Naive thymus-derived CD4-positive, alpha-beta T cell (primary cell): ENCODE measurements at regions of chr3 and their contacts with region 1.

Region 1: DNA sequence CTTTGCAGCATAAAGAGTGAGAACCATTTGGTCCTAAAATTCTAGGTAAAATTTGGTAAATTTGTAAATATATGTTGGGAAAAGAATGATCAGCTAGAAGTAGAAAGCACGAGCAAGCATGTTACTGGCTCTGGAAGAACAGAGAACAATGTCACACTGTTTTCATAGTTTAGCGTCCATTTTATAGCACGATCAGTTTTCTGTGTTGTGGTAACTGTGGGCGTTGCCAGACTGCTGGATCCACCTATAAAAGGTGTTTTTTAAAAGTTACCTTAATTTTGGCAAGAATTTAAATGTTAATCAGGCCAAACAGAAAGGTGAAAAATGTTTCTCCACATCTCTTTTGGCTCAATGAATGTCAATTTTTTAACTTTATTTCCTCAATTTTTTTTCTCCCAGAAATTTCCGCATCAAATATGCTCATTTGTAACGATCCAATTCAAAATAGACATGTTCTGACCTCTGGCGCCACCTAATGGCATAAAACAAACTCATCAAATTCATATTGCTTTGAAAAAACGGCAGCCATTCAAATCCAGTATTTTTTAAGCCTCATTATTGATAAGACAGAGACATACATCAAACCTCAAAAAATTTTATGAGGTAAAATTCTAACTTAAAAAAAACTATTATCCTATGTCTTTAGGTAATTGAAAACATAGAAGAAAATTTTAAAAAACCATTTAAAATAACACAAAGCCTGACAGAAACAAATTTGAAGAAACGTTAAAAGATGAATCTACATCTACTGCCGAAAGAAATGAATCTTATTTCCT is 5.5 kb upstream of the GP5 start:
- DNase-seq: peak in 7 of 9 donors; percentile 47 to 71 (median 65)
- ATAC-seq: peak; percentile 80
- H3K4me3 ChIP-seq: no peak overlapping the region
- H3K4me3 Mint-ChIP-seq: peak overlapping the region in 7 of 10 donors; percentile 1 to 76 (median 43)
- H3K27ac ChIP-seq: no peak overlapping the region
- H3K27ac Mint-ChIP-seq: peak overlapping the region in 4 of 9 donors; percentile 1 to 9 (median 3)
- H3K4me1 ChIP-seq: peaks cover 0 to 7% of the 10 kb centered on the region in 2 donors
- H3K4me1 Mint-ChIP-seq: peaks cover 7 to 17% (median 16%) of the 10 kb centered on the region in 7 donors
- H3K27me3 ChIP-seq: no peaks in the 10 kb centered on the region
- H3K27me3 Mint-ChIP-seq: no peaks in the 10 kb centered on the region

Region 2: DNA sequence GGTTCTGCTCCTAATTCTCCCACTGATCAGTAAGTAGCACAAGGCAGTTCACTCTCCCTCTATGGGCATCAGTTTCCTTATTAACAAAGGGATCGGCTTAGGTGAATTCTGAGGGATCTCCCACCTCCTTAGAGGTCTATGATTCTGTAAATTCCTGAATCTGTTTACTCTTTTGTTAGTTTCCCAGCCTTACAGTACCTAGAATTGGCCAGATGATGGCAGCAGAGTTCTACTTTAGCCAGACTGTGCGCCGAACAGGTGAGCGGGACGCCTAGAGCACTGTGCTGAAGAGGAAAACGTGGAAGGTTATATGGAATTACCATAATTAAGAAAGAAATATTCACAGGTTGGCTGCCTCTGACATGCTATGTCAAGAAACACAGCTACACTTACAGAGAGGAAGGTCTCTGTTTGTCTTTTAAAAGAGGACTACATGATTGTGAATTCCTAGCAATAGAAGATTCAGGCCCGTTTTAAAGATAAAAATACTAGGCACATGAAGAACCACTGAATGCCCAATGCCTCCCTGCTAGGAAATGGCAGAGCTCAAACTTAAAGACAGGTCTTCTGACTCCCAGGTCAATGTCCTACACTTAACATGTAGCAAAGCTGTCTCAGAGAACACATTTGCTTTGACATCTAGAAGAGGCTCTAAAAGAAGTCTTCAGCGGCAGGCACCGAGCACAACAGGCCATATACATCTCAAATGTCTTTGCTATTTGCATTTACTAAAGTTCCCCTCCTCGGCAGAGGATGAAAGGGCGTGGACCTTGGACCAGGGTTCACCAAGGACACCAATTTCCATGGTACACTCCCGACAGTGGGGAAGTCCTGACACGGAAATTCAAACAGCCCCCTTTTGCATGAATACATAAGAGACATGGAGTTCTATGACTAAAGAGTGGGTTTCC is 1937.1 kb before region 1 on chr3:
- CTCF ChIA-PET with region 1: no interaction called
- POLR2A ChIA-PET with region 1: no interaction called
- intact Hi-C with region 1: loop called in 1 of 2 experiments (anchors 5 kb)
- DNase-seq: peak; percentile 7 to 45 (median 31)
- ATAC-seq: peak; percentile 83
- H3K4me3 ChIP-seq: no peak overlapping the region
- H3K4me3 Mint-ChIP-seq: peak overlapping the region in 1 of 10 donors; percentile 18
- H3K27ac ChIP-seq: no peak overlapping the region
- H3K27ac Mint-ChIP-seq: no peak overlapping the region
- H3K4me1 ChIP-seq: no peaks in the 10 kb centered on the region
- H3K4me1 Mint-ChIP-seq: peaks cover 0 to 4% (median 0%) of the 10 kb centered on the region in 7 donors
- H3K27me3 ChIP-seq: no peaks in the 10 kb centered on the region
- H3K27me3 Mint-ChIP-seq: peaks cover 11 to 26% (median 19%) of the 10 kb centered on the region in 5 donors

Region 3: DNA sequence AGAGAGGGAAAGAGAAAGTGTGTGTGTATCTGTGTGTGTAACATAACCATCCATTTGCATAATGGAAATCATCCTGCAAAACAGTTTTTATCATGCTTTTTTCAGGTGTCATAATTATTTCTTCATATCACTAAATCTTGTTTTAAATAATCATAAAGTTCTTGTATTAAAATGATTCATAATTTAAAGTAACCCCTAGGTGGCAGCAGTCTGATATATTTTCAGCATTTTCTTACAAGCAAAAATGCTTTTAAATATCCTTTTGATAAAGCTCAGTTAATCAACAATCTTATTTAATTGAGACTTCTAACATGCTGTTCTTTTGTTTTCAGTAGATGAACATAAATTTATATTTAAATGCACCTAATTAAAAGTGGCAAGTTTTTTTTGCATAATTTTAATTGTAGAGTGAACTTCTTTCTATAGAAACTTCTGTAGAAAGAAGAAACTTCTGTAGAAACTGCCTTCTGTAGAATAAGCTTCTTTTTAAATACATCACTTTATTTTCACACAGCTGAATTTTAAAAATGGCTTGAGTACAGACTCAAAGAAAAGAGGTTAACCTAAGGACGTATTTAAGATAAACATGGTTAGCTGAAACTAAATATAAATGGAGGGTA is 739.1 kb before region 1 on chr3:
- CTCF ChIA-PET with region 1: interaction called, 4 read pairs
- POLR2A ChIA-PET with region 1: no interaction called
- intact Hi-C with region 1: loop called in 1 of 2 experiments (anchors 1 kb)
- DNase-seq: peak in 6 of 9 donors; percentile 4 to 43 (median 24)
- ATAC-seq: no peak
- H3K4me3 ChIP-seq: no peak overlapping the region
- H3K4me3 Mint-ChIP-seq: no peak overlapping the region
- H3K27ac ChIP-seq: no peak overlapping the region
- H3K27ac Mint-ChIP-seq: no peak overlapping the region
- H3K4me1 ChIP-seq: no peaks in the 10 kb centered on the region
- H3K4me1 Mint-ChIP-seq: no peaks in the 10 kb centered on the region
- H3K27me3 ChIP-seq: no peaks in the 10 kb centered on the region
- H3K27me3 Mint-ChIP-seq: no peaks in the 10 kb centered on the region

Region 4: GRCh38 chr3:194333212-194333980 is 71.2 kb before region 1 on chr3:
- CTCF ChIA-PET with region 1: interaction called, 256 read pairs
- POLR2A ChIA-PET with region 1: interaction called, 9 read pairs
- intact Hi-C with region 1: loop called (anchors 1 kb)
- DNase-seq: peak; percentile 78 to 94 (median 88)
- ATAC-seq: peak; percentile 98
- H3K4me3 ChIP-seq: peak overlapping the region; percentile 53
- H3K4me3 Mint-ChIP-seq: peak overlapping the region; percentile 12 to 84 (median 71)
- H3K27ac ChIP-seq: no peak overlapping the region
- H3K27ac Mint-ChIP-seq: no peak overlapping the region
- H3K4me1 ChIP-seq: peaks cover 0 to 4% of the 10 kb centered on the region in 2 donors
- H3K4me1 Mint-ChIP-seq: peaks cover 0 to 12% (median 4%) of the 10 kb centered on the region in 7 donors
- H3K27me3 ChIP-seq: peaks cover 0 to 6% of the 10 kb centered on the region in 2 donors
- H3K27me3 Mint-ChIP-seq: peaks cover 9 to 30% (median 22%) of the 10 kb centered on the region in 5 donors

Region 5: DNA sequence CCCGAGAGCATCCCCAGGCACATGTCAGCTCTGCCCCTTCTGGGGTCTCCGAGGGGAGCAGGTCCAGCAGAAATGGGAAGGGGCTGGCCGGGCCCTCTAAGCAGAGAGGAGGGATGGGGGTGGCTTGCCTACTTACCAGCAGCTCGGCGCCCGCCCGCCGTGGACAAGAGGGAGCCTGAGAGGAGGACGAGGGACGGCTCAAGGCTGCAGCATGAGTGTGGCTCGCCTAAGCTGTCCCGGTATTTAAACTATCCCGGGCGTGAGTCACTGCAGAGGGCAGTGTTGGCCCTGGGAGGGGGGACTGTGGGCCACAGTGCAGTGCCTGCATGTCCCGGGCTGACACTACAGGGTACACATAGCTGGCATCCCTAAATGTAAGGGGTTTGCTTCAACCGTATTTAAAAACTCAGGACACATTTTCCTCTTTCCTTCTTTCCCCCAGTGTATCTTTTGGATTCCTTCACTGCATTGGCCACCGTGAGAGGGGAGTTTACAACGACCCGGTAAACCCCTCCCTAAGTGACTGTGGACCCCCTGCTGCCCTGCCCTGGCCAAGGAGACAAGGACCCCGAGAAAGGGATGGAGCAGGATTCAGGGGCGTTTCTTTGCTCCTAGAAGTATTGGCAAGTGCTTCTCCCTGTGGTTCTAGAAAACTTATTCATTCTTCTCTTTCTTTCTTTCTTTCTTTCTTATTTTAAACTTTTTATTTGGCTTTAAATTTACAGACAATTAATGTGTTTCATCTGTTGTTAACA is 34.9 kb before region 1 on chr3 and contains the start of gene LRRC15:
- CTCF ChIA-PET with region 1: interaction called, 3 read pairs
- POLR2A ChIA-PET with region 1: no interaction called
- intact Hi-C with region 1: loop called in 1 of 2 experiments (anchors 1 kb)
- DNase-seq: no peak
- ATAC-seq: peak; percentile 49
- H3K4me3 ChIP-seq: no peak within 1 kb of the TSS
- H3K4me3 Mint-ChIP-seq: peak within 1 kb of the TSS in 1 of 10 donors; percentile 26
- H3K27ac ChIP-seq: no peak within 1 kb of the TSS
- H3K27ac Mint-ChIP-seq: no peak within 1 kb of the TSS
- H3K4me1 ChIP-seq: no peaks in the 10 kb centered on the region
- H3K4me1 Mint-ChIP-seq: peaks cover 0 to 5% (median 0%) of the 10 kb centered on the region in 7 donors
- H3K27me3 ChIP-seq: no peaks in the 10 kb centered on the region
- H3K27me3 Mint-ChIP-seq: peaks cover 26 to 43% (median 36%) of the 10 kb centered on the region in 5 donors
- total RNA-seq, gene LRRC15: not detected